ENCODE measurements at regions of chr7 and their contacts with region 1.

Region 1: DNA sequence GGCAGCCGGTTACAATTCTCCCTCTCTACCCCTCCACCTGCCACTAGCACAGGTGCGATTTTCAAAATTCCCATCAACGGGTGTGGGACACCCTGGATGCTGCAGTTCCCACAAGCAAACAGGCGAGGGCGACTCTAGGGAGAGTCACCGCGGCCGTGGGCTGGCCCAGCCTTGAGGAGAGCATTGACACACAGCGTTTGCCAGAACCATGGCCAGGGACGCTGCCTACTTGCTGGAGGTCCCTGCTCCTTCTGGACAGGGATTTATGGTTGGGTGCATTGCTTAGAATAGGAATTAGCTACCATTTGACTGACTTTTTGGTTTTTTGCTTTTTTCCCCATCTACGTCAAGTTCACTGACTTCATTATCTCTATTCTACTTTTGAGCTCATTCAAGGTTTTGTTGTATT is 19.0 kb upstream of the CLDN4 start:
- DNase-seq: peak; percentile 59
- H3K4me3 ChIP-seq: no peak overlapping the region
- H3K27ac ChIP-seq: no peak overlapping the region
- H3K4me1 ChIP-seq: no peaks in the 10 kb centered on the region
- H3K27me3 ChIP-seq: no peaks in the 10 kb centered on the region
- CTCF ChIP-seq: peak; percentile 82 to 85
- POLR2A ChIP-seq: no peak

Region 2: DNA sequence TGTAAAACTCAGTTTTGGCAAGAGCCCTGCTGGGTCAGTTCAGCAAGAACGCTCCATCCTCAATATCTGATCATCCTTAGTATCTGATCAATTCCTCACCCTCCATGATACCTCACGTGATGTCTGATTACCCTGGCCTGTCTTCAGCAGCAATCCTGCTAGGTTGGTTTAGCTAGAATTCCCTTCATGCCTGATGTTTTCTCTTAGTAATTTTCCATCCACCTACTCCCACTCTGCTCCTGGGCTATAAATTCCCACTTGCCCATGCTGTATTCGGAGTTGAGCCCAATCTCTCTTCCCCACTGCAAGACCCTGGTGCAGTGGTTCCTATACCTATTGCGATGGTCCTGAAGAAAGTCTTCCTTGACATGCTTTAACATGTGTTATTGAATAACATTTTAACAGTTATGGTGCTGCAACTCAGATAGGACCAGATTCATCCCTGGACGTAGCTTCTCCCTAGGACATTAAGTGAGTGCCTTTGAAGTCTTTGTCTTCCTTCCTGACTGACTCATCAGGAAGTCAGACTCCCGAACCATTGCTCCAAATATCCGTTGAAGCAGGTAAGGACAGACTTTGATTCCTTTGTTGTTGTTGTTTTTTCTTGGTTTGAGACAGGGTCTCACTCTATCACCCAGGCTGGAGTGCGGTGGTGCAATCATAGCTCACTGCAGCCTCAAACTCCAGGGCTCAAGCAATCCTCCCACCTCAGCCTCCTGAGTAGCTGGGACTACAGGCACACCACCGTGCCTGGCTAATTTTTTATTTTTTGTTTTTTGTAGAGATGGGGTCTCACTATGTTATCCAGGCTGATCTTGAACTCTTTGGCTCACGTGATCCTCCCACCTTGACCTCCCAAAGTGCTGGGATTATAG is 12.3 kb before region 1 on chr7:
- CTCF ChIA-PET with region 1: interaction called, 15 read pairs
- POLR2A ChIA-PET with region 1: no interaction called
- dilution Hi-C with region 1: no loop called
- intact Hi-C with region 1: no loop called
- DNase-seq: no peak
- H3K4me3 ChIP-seq: no peak overlapping the region
- H3K27ac ChIP-seq: no peak overlapping the region
- H3K4me1 ChIP-seq: peaks cover 5% of the 10 kb centered on the region
- H3K27me3 ChIP-seq: no peaks in the 10 kb centered on the region
- CTCF ChIP-seq: no peak
- POLR2A ChIP-seq: no peak

Region 3: GRCh38 chr7:73828107-73828803 is 16.5 kb after region 1 on chr7:
- CTCF ChIA-PET with region 1: interaction called, 21 read pairs
- POLR2A ChIA-PET with region 1: no interaction called
- dilution Hi-C with region 1: no loop called
- intact Hi-C with region 1: no loop called
- DNase-seq: peak; percentile 69
- H3K4me3 ChIP-seq: no peak overlapping the region
- H3K27ac ChIP-seq: no peak overlapping the region
- H3K4me1 ChIP-seq: peaks cover 5% of the 10 kb centered on the region
- H3K27me3 ChIP-seq: no peaks in the 10 kb centered on the region
- CTCF ChIP-seq: no peak
- POLR2A ChIP-seq: no peak

Region 4: GRCh38 chr7:73833312-73833919 is 21.7 kb after region 1 on chr7:
- CTCF ChIA-PET with region 1: interaction called, 11 read pairs
- POLR2A ChIA-PET with region 1: no interaction called
- dilution Hi-C with region 1: no loop called
- intact Hi-C with region 1: no loop called
- DNase-seq: no peak
- H3K4me3 ChIP-seq: no peak overlapping the region
- H3K27ac ChIP-seq: no peak overlapping the region
- H3K4me1 ChIP-seq: no peaks in the 10 kb centered on the region
- H3K27me3 ChIP-seq: no peaks in the 10 kb centered on the region
- CTCF ChIP-seq: no peak
- POLR2A ChIP-seq: no peak

Region 5: DNA sequence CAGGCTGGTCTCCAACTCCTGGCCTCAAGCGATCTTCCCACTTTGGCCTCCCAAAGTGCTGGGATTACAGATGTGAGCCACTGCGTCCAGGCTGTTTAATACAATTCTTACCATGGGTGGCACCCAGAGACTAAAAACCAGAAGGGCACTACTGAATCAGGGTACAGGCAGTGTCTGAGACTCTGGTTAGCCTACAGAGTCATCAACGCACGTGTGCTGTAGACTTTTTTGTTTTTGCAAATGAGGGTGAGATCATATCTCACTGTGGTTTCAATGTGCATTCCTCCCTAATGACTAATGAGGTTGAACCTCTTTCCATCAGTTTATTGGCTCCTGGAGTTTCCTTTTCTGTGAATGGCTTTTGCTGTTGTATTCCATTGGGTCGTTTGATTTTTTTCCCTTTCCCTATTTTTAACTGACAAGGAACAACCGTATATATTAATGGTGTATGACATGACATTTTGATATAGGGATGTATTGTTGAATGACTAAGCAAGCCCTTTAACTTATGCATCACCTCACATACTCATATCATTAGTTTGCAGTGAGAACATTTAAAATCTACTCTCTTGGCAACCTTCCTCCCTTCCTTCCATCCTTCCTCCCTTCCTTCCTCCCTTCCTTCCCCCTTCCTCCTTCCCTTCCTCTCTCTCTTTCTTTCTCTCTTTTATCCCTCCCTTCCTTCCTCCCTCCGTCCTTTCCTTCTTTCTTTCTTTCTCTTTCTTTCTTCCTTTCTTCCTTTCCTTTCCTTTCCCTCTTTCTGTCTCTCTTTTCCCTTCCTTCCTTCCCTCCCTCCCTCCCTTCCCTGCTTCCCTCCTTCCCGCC is 39.9 kb after region 1 on chr7:
- CTCF ChIA-PET with region 1: interaction called, 110 read pairs
- POLR2A ChIA-PET with region 1: no interaction called
- dilution Hi-C with region 1: no loop called
- intact Hi-C with region 1: loop called (anchors 1 kb)
- DNase-seq: peak; percentile 97
- H3K4me3 ChIP-seq: no peak overlapping the region
- H3K27ac ChIP-seq: peak overlapping the region; percentile 93
- H3K4me1 ChIP-seq: peaks cover 16% of the 10 kb centered on the region
- H3K27me3 ChIP-seq: no peaks in the 10 kb centered on the region
- CTCF ChIP-seq: no peak
- POLR2A ChIP-seq: peak; percentile 39

Region 6: GRCh38 chr7:73856941-73857340 is 45.2 kb after region 1 on chr7:
- CTCF ChIA-PET with region 1: interaction called, 110 read pairs
- POLR2A ChIA-PET with region 1: no interaction called
- dilution Hi-C with region 1: no loop called
- intact Hi-C with region 1: loop called (anchors 1 kb)
- DNase-seq: no peak
- H3K4me3 ChIP-seq: no peak overlapping the region
- H3K27ac ChIP-seq: no peak overlapping the region
- H3K4me1 ChIP-seq: peaks cover 7% of the 10 kb centered on the region
- H3K27me3 ChIP-seq: no peaks in the 10 kb centered on the region
- CTCF ChIP-seq: no peak
- POLR2A ChIP-seq: no peak

Region 7: DNA sequence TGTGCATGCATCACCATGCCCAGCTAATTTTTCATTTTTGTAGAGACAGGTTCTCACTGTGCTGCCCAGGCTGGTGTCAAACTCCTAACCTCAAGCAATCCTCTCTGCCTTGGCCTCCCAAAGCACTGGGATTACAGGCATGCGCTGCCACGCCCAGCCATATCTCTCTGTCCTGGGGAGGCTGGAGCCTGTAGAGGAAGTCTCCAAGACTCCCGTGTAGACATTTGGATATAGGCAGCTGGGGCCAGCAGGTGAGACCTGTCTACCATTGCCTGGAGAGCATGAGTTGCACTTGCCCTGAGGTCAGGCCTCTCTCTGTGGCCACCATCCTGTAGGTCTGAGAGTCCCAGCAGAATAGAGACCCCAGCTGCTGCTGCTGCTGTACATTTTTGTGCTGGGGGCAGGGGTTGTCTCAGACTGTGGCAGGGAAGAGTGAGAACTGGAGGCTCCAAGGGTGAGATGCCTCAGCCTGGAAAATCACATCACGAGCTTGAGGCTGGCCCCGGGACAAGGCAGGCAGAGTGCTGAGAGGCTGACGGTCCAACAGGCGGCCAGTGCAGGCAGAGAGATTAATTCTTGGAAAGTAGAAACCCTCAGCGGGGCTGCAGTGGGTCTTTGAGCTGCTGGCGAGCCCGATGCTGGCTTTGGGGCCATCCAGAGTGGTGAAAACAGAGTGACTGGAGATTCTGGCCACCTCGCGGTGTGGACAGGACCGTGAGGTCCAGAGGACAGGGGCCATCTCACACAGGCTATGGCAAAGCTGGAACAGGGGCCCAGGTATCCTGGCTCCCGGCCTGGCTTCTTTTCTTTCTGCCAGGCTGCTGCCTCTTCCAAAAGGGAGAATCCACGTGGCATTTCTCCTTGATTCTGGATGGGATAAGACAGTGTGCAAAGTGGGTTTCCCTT is 110.1 kb after region 1 on chr7:
- CTCF ChIA-PET with region 1: no interaction called
- POLR2A ChIA-PET with region 1: no interaction called
- dilution Hi-C with region 1: no loop called
- intact Hi-C with region 1: no loop called
- DNase-seq: no peak
- H3K4me3 ChIP-seq: no peak overlapping the region
- H3K27ac ChIP-seq: no peak overlapping the region
- H3K4me1 ChIP-seq: no peaks in the 10 kb centered on the region
- H3K27me3 ChIP-seq: peaks cover 8 to 11% of the 10 kb centered on the region in 2 experiments
- CTCF ChIP-seq: no peak
- POLR2A ChIP-seq: no peak

Measured in endothelial cell of umbilical vein (primary cell).